Activated B cell treated with CpG ODN at 0.5 μM for 24 hours (primary cell): ENCODE measurements at regions of chr1 and their contacts with region 1.

Region 1: GRCh38 chr1:153670859-153671627 is at the start of gene ILF2:
- DNase-seq: peak; percentile 85
- ATAC-seq: peak; percentile 83
- H3K4me3 Mint-ChIP-seq: no peak within 1 kb of the TSS
- H3K27ac Mint-ChIP-seq: no peak within 1 kb of the TSS
- H3K4me1 Mint-ChIP-seq: peaks cover 28% of the 10 kb centered on the region
- H3K27me3 Mint-ChIP-seq: no peaks in the 10 kb centered on the region
- CTCF ChIP-seq: no peak
- total RNA-seq, gene ILF2: 182 and 191 TPM in 2 replicates

Region 2: DNA sequence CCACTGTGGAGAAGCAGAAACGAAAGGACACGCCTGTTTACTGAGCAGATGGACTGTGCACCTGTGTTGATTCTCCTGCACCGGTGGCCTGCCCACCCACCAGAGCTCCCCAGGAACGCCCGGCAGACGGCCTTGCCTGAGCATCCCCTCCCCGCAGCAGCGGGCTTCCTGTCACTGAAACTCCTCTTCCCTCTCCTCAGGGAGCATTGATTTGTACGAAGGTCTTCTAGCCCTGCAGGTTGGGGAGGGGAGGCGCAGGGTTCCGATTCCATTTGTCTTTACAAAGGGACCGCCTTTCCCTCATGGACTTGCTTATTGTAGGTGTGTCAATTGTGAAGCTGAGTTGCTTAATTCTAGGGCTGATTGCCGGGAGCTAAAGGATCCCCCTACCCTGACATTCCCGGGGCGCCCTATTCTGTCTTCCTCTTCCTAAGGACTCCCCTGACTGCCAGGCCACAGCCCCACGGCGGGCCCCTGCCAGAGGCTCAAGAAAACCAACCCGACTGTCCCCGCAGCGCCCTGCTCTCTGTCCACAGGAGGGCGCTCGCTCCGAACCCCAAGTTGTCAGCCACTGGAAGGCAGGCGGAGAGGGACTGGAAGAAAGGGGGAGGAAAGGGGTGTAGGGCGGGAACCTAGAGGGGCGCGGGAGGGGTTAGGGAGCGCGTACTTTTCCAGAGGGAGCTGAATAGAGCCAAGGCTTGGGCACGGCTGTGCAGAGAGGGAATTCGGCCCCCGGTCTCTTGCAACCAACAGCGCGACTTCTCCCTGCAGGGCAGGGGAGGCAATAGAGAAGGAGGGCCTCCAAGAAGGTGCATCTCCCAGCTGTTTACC is 138.1 kb before region 1 on chr1:
- CTCF ChIA-PET with region 1: no interaction called
- POLR2A ChIA-PET with region 1: interaction called, 3 read pairs
- intact Hi-C with region 1: loop called (anchors 5 kb)
- DNase-seq: peak; percentile 60
- ATAC-seq: peak; percentile 26
- H3K4me3 Mint-ChIP-seq: peak overlapping the region; percentile 48
- H3K27ac Mint-ChIP-seq: peak overlapping the region; percentile 13
- H3K4me1 Mint-ChIP-seq: peaks cover 45% of the 10 kb centered on the region
- H3K27me3 Mint-ChIP-seq: no peaks in the 10 kb centered on the region
- CTCF ChIP-seq: no peak

Region 3: DNA sequence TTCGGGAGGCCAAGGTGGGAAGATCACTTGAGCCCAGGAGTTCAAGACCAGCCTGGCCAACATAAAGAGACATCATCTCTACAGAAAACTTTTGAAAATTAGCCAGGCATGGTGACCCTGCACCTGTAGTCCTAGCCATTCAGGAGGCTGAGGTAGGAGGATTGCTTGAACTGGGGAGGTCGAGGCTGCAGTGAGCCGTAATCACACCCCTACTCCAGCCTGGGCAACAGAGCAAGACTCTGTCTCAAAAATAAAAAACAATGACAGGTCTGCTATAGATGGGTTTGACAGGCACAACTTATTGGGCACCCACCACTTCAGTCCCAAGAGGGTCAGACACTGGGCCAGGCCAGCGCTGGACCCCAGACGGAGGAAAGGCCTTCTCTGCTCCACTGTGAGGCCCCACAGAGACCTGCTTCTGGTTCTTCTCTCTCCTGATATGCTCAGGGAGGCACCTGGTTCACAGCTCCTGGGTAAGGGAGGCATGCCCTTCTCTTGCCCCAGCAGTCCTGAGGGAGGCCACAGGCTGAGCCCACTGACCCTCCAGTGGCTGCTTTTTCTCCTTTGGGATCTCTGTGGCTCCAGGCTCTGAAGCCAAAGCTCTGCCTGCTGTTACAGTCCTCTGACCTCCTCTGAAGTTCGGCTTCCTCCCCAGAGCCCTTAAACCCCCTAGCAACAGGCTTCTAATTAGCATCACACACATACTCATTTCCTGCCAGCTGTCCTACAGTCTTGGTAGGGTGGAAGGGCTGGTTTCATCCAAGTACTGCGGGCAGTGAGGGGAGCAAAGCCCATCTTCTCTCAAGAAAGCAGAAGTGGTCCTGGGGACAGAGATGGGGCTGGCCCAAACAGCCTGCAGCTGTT is 72.5 kb before region 1 on chr1:
- CTCF ChIA-PET with region 1: interaction called, 3 read pairs
- POLR2A ChIA-PET with region 1: no interaction called
- intact Hi-C with region 1: loop called (anchors 1 kb)
- DNase-seq: peak; percentile 57
- ATAC-seq: peak; percentile 92
- H3K4me3 Mint-ChIP-seq: peak overlapping the region; percentile 73
- H3K27ac Mint-ChIP-seq: peak overlapping the region; percentile 96
- H3K4me1 Mint-ChIP-seq: peaks cover 48% of the 10 kb centered on the region
- H3K27me3 Mint-ChIP-seq: no peaks in the 10 kb centered on the region
- CTCF ChIP-seq: no peak

Region 4: DNA sequence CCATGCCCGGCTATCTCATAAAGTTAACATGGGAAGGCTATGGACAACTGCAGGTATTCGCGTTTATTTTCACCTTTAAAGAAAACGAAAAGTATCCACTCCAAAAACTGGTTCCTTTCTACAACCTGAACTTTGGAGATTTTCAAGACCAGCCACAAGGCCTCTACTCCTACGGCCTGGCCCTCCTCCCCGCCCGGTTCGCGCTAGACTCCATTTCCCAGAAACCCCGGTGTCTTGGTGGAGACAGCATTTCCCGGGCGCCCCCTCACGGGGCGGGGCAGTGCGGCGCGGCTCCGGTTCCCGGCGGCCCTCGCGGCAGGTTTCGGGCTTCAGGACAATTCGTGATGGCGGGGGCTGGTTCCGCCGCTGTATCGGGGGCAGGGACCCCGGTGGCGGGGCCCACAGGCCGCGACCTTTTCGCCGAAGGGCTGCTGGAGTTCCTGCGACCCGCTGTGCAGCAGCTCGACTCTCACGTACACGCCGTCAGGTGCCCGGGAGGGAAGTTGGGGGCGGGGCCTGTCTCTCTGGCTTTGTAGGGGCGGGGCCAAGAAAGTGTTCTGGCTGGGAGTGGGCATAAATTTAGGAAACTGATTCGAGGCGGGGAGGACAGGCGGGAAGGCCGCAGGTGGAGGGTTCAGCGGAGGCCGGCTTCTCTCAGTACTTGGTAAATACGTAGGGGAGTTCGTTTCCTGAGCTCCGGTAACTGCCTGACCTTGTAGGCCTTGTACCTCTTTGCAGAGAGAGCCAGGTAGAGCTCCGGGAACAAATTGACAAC is 12.5 kb before region 1 on chr1 and contains the start of gene SNAPIN:
- CTCF ChIA-PET with region 1: no interaction called
- POLR2A ChIA-PET with region 1: interaction called, 9 read pairs
- intact Hi-C with region 1: loop called (anchors 1 kb)
- DNase-seq: peak; percentile 94
- ATAC-seq: peak; percentile 99
- H3K4me3 Mint-ChIP-seq: peak within 1 kb of the TSS; percentile 96
- H3K27ac Mint-ChIP-seq: peak within 1 kb of the TSS; percentile 91
- H3K4me1 Mint-ChIP-seq: peaks cover 14% of the 10 kb centered on the region
- H3K27me3 Mint-ChIP-seq: no peaks in the 10 kb centered on the region
- CTCF ChIP-seq: no peak
- total RNA-seq, gene SNAPIN: 50.4 and 51.5 TPM in 2 replicates

Region 5: DNA sequence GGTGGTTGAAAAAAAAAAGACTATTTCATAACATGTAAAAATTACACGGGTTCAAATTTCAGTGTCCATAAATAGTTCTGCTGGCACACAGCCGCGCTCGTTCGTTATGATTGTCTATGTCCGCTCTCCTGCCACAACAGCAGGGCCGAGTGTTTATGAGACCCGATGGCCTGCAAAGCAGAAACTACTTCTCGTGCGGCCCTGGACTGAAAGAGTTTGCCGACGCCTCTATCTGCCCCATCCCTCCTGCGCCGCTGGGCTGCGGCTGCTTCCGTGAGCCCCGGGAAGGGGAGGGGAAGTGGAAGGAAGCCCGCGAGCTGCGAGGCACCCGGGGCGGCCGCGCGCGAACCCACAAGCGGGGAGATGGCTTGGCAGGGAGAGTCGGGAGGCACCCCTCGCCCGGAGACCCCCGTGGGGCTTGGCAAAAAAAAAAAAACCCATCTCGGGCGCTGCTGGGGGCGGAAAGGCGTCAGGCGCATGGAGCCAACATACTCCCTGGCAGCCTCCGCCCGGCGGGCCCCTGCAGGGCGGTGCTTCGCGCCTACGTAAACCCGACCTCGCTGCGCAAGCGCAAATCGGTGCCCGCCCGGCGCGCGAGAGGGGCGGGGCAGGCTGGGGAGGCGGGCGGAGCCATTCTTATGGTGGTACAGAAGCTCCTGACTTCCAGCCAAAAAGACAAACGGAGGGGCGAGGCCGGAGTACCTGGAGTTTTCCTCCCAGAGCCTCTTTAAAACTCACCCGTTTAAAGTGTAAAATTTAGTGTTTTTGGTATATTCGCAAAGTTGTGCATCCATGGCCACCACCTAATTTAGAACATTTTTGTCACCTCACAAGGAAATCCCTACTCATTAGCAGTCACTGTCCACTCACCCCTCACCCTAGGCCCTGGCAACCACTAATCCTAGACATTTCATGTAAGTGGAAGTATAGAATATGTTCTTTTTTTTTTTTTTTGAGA is 112.5 kb after region 1 on chr1:
- CTCF ChIA-PET with region 1: no interaction called
- POLR2A ChIA-PET with region 1: interaction called, 6 read pairs
- intact Hi-C with region 1: loop called (anchors 1 kb)
- DNase-seq: peak; percentile 92
- ATAC-seq: peak; percentile 96
- H3K4me3 Mint-ChIP-seq: peak overlapping the region; percentile 93
- H3K27ac Mint-ChIP-seq: peak overlapping the region; percentile 96
- H3K4me1 Mint-ChIP-seq: peaks cover 25% of the 10 kb centered on the region
- H3K27me3 Mint-ChIP-seq: no peaks in the 10 kb centered on the region
- CTCF ChIP-seq: no peak

Region 6: GRCh38 chr1:153790966-153791647 is 120.1 kb after region 1 on chr1:
- CTCF ChIA-PET with region 1: no interaction called
- POLR2A ChIA-PET with region 1: no interaction called
- intact Hi-C with region 1: loop called (anchors 2 kb)
- DNase-seq: no peak
- ATAC-seq: peak; percentile 92
- H3K4me3 Mint-ChIP-seq: peak overlapping the region; percentile 71
- H3K27ac Mint-ChIP-seq: peak overlapping the region; percentile 96
- H3K4me1 Mint-ChIP-seq: peaks cover 45% of the 10 kb centered on the region
- H3K27me3 Mint-ChIP-seq: no peaks in the 10 kb centered on the region
- CTCF ChIP-seq: no peak

Region 7: GRCh38 chr1:154183045-154183915 is 512.2 kb after region 1 on chr1:
- CTCF ChIA-PET with region 1: no interaction called
- POLR2A ChIA-PET with region 1: no interaction called
- intact Hi-C with region 1: loop called (anchors 1 kb)
- DNase-seq: peak; percentile 93
- ATAC-seq: peak; percentile 76
- H3K4me3 Mint-ChIP-seq: peak overlapping the region; percentile 100
- H3K27ac Mint-ChIP-seq: peak overlapping the region; percentile 100
- H3K4me1 Mint-ChIP-seq: peaks cover 48% of the 10 kb centered on the region
- H3K27me3 Mint-ChIP-seq: peaks cover 2% of the 10 kb centered on the region
- CTCF ChIP-seq: no peak